HEK293 (cell line): ENCODE measurements at regions of chr14 and their contacts with region 1.

Region 1: DNA sequence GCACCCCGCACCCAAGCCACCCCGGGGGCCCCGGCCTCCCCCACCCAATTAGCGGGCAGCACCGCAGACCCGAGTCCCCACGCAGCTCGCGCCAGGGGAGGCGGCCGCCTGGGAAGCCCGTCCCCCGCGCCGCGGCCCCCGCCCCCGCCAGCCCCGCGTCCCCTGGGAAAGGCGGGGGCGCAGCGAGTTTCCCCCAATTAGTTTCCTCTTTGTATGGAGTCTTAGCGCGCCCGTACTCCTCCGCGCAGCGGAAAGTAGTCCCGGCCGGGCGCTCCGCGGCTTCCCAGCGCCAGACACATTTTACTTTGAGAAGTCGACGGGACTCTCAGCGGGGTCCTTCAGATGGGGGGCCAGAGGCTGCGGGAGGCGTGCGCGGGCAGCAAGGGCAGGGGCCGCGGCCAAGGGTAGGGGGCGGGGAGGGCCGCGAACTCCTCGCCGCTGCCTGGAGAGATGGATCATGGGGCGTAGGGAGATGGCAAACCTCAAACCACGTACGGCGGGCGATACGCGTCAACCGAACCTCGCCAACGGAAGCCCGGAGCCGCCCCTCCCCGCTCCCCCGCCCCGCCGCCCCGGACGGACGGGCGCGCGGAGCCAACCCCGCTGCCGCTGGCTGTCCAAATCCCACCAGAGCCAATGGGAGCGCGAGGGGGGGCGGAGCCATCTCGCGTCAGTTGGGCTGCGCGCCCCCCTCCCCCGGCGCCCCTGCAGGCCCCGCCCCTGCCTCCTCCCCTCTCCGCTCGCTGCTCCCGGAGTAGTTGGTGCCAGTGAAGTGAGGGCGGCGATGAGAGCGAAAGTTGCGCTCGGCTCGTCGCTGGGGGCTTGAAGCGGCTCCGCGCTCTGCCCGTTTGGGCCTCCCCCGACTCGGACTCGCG is at the start of gene RCOR1:
- H3K4me3 ChIP-seq: peak within 1 kb of the TSS; percentile 89
- H3K27ac ChIP-seq: peak within 1 kb of the TSS; percentile 96
- H3K4me1 ChIP-seq: no peaks in the 10 kb centered on the region; the same call in 1 of the 2 replicates
- CTCF ChIP-seq: no peak

Region 2: GRCh38 chr14:102516531-102517415 is 75.4 kb before region 1 on chr14:
- CTCF ChIA-PET with region 1: interaction called, 11 read pairs
- POLR2A ChIA-PET with region 1: no interaction called
- H3K4me3 ChIP-seq: peak overlapping the region; percentile 40
- H3K27ac ChIP-seq: peak overlapping the region; percentile 49; the same call in 1 of the 2 replicates
- H3K4me1 ChIP-seq: no peaks in the 10 kb centered on the region
- CTCF ChIP-seq: peak; percentile 60

Region 3: DNA sequence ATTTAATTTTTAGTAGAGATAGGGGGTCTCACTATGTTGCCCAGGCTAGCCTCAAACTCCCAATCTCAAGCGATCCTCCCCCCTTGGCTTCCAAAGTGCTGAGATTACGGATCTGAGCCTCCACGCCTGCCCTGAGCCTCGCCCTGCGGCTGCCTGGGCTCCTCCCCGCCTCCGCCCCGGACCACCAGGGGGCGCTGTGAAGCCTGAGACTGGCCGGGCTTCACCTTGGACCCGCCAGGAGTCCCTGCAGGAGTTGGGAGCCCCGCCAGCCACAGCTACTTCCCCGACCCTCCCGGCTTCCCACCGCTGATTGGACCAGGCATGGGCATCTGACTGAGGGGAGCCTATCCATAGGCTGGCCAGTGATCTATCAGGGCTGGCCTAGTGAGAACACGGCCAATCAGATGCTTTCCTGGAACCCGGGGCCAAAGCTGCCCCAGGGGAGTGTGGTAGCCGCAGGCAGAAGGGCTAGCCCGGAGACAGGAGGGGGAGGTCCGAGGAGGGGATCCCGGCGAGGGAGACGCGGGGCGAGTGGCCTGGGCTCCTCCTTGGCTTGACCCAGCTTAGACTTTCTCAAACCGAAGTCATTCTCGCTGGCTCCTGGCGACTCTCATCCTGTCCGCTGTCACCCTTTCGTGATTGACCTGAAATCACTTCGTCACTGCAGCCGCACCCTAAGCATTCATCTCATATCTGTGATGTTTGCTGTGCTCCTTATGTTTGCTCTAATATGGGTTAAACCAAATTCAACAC is 67.5 kb before region 1 on chr14:
- CTCF ChIA-PET with region 1: interaction called, 16 read pairs
- POLR2A ChIA-PET with region 1: interaction called, 11 read pairs
- H3K4me3 ChIP-seq: peak overlapping the region; percentile 64
- H3K27ac ChIP-seq: peak overlapping the region; percentile 75
- H3K4me1 ChIP-seq: no peaks in the 10 kb centered on the region
- CTCF ChIP-seq: peak; percentile 99

Region 4: DNA sequence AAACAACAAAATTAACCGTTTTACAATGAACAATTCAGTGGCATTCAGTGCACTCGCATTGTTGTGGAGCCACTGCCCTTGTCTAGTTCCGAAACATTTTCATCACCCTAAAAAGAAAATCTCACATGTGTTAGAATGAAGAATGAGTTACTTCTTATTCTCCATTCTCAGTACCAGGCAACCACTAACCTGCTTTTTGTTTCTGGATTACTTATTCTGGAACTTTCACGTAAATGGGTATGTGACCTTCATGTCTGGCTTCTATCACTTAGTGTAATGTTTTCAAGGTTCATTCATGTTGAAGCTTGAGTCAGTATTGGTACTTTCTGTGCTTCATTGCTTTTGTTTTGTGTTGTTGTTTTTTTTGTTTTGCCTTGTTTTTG is 15.9 kb after region 1 on chr14:
- CTCF ChIA-PET with region 1: interaction called, 19 read pairs
- POLR2A ChIA-PET with region 1: interaction called, 4 read pairs
- H3K4me3 ChIP-seq: no peak overlapping the region
- H3K27ac ChIP-seq: no peak overlapping the region
- H3K4me1 ChIP-seq: peaks cover 12% of the 10 kb centered on the region; the same call in 1 of the 2 replicates
- CTCF ChIP-seq: no peak

Region 5: DNA sequence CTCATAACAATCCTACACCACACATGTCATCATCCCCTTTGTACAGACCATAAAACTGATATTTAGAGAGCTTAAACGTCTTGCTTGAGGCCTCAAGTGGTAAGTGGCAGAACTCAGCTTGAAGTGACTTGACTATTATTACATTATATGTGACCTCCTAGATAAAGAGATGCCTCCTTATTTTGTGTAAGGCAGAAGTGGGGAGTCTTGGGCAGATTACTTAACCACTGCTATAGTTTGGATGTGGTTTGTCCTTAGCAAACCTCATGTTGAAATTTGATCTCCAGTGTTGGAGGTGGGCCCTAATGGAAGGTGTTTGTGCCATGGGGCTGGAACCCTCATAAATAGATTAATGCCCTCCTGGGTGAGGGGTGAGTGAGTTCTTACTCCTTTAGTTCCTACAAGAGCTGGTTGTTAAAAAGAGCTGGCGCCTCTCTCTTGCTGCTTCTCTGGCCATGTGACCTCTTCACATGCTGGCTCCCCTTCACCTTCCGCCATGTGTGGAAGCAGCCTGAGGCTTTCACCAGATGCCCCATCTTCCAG is 37.8 kb after region 1 on chr14:
- CTCF ChIA-PET with region 1: interaction called, 10 read pairs
- POLR2A ChIA-PET with region 1: no interaction called
- H3K4me3 ChIP-seq: no peak overlapping the region
- H3K27ac ChIP-seq: peak overlapping the region; percentile 48; the same call in 1 of the 2 replicates
- H3K4me1 ChIP-seq: peaks cover 13% of the 10 kb centered on the region
- CTCF ChIP-seq: no peak

Region 6: DNA sequence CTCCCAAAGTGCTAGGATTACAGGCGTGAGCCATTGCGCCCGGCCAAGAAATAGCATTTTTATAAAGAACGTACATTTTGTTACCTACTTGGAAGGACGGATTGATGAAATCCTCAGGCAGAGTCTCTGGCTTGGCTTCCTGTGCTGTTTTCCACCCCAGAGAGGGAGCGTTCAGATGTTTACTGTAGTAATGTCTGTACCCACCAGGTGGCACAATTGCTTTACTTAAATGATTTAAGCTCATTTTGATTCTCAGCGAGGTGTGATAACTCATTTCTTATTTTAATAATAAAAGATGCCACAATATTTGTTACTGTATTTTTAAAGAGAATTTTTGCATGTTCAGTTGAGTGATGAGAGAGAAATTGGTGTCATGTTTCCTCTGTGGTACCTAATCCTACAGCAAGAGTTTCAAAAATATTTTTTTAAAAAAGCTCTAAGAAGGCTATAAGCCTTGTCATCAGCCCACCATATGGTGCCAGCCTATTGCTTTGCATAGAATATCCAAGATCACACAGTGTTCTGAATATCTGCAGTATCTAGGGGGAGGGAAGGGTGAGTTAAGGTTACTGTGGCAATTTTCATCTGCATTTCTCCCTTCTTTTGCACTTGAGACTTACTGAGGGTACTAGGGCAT is 102.5 kb after region 1 on chr14:
- CTCF ChIA-PET with region 1: interaction called, 21 read pairs
- POLR2A ChIA-PET with region 1: no interaction called
- H3K4me3 ChIP-seq: no peak overlapping the region
- H3K27ac ChIP-seq: no peak overlapping the region
- H3K4me1 ChIP-seq: peaks cover 3% of the 10 kb centered on the region
- CTCF ChIP-seq: 0 out of 2 replicates have a peak, but pooled peaks have one; percentile 13